MCF 10A (cell line): ENCODE measurements at regions of chr10 and their contacts with region 1.

Region 1: GRCh38 chr10:116268976-116269375 is 4.0 kb downstream of the GFRA1 start:
- DNase-seq: peak; percentile 26
- H3K4me3 Mint-ChIP-seq: no peak overlapping the region
- H3K27ac Mint-ChIP-seq: no peak overlapping the region
- H3K4me1 Mint-ChIP-seq: peaks cover 7% of the 10 kb centered on the region
- H3K27me3 Mint-ChIP-seq: peaks cover 10% of the 10 kb centered on the region
- CTCF ChIP-seq: peak; percentile 16

Region 2: DNA sequence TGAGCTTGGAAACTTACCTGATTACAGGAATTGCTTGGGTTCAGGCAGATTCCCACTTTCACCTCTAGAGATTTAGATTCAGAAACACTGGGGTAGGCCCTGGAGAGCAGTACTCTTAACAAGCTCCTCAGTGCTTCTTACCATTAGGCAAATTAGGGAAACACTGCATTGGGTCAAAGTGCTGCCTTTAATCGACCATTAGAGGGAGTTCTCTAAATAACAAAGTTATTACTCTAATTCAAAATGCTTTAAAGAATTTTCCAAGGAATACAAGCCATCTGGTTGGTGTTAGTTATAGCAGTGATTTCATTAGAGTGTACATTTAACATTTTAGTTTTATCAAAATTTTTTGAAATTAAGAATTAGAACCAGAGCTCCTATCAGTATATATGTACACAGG is 320.5 kb before region 1 on chr10:
- CTCF ChIA-PET with region 1: no interaction called
- POLR2A ChIA-PET with region 1: no interaction called
- intact Hi-C with region 1: loop called (anchors 5 kb)
- DNase-seq: peak; percentile 37
- H3K4me3 Mint-ChIP-seq: no peak overlapping the region
- H3K27ac Mint-ChIP-seq: no peak overlapping the region
- H3K4me1 Mint-ChIP-seq: peaks cover 14% of the 10 kb centered on the region
- H3K27me3 Mint-ChIP-seq: no peaks in the 10 kb centered on the region
- CTCF ChIP-seq: peak; percentile 26

Region 3: GRCh38 chr10:116121640-116122525 is 147.1 kb before region 1 on chr10:
- CTCF ChIA-PET with region 1: no interaction called
- POLR2A ChIA-PET with region 1: no interaction called
- intact Hi-C with region 1: no loop called
- DNase-seq: no peak
- H3K4me3 Mint-ChIP-seq: no peak overlapping the region
- H3K27ac Mint-ChIP-seq: no peak overlapping the region
- H3K4me1 Mint-ChIP-seq: no peaks in the 10 kb centered on the region
- H3K27me3 Mint-ChIP-seq: no peaks in the 10 kb centered on the region
- CTCF ChIP-seq: no peak